CD8-positive, alpha-beta T cell (primary cell): ENCODE measurements at regions of chr19 and their contacts with region 1.

Region 1: GRCh38 chr19:15432629-15433518 is 14.1 kb upstream of the AKAP8L start:
- DNase-seq: peak; percentile 85 to 96 (median 91)
- ATAC-seq: peak; percentile 95
- H3K4me3 ChIP-seq: peak overlapping the region; percentile 88 to 100
- H3K4me3 Mint-ChIP-seq: peak overlapping the region; percentile 89
- H3K27ac ChIP-seq: peak overlapping the region; percentile 76 to 79
- H3K27ac Mint-ChIP-seq: peak overlapping the region; percentile 87
- H3K4me1 ChIP-seq: peaks cover 31% of the 10 kb centered on the region
- H3K4me1 Mint-ChIP-seq: peaks cover 26% of the 10 kb centered on the region
- H3K27me3 ChIP-seq: no peaks in the 10 kb centered on the region
- H3K27me3 Mint-ChIP-seq: no peaks in the 10 kb centered on the region
- CTCF ChIP-seq: no peak

Region 2: GRCh38 chr19:15466851-15467733 is 34.2 kb after region 1 on chr19:
- CTCF ChIA-PET with region 1: interaction called, 6 read pairs
- POLR2A ChIA-PET with region 1: interaction called, 8 read pairs
- intact Hi-C with region 1: loop called (anchors 1 to 5 kb)
- DNase-seq: peak in 8 of 9 experiments; percentile 32 to 75 (median 59)
- ATAC-seq: peak; percentile 25
- H3K4me3 ChIP-seq: no peak overlapping the region
- H3K4me3 Mint-ChIP-seq: peak overlapping the region; percentile 50
- H3K27ac ChIP-seq: peak overlapping the region in 1 of 2 experiments; percentile 68
- H3K27ac Mint-ChIP-seq: peak overlapping the region; percentile 89
- H3K4me1 ChIP-seq: peaks cover 58% of the 10 kb centered on the region
- H3K4me1 Mint-ChIP-seq: peaks cover 61% of the 10 kb centered on the region
- H3K27me3 ChIP-seq: no peaks in the 10 kb centered on the region
- H3K27me3 Mint-ChIP-seq: no peaks in the 10 kb centered on the region
- CTCF ChIP-seq: no peak

Region 3: DNA sequence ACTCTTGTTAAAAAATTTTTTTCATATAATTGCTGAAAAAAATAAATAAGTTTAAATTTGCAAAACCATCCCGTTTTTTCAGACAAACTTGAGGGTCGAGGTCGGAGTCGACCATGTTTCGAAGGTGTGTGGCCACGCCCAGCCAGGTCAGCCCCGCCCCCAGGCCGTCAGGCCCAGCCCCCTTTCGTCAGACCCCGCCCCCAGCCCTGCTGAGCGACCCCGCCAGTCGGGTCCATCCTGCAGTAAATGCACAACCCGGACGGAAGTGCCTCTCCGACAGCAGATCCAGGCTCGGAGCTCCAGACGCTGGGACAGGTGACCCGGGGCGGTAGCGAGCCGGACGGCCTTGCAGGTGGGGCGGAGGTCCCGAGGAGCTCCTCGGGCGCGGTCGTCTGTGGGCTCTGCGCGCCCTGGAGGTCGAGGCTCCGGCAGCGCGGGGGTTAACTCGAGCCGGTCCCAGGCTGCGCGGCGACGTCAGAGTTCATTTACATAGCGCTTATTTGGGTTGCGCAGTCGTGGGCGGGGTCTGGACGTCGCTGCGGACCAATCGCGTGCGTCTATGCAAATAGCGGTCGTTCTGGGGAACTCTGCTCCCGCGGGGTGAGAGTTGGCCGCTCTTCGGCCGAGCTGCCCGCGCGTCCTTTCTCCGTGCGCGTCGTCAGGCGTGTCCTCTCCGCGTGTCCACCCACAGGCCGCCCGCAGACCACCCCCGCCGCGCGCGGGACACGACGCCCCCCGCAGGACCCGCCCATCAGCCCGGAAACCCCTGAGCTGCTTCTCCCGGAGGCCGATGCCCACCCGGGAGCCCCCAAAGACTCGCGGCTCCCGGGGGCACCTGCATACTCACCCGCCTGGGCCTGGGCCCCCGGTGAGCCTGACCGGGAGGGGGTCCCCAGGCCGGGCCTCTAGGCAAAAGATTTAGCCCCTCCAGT is 1793.4 kb after region 1 on chr19 and contains the start of gene OCEL1:
- CTCF ChIA-PET with region 1: no interaction called
- POLR2A ChIA-PET with region 1: no interaction called
- intact Hi-C with region 1: loop called in 1 of 2 experiments (anchors 5 kb)
- DNase-seq: peak; percentile 92 to 99 (median 96)
- ATAC-seq: peak; percentile 91
- H3K4me3 ChIP-seq: peak within 1 kb of the TSS; percentile 71 to 100
- H3K4me3 Mint-ChIP-seq: peak within 1 kb of the TSS; percentile 91
- H3K27ac ChIP-seq: peak within 1 kb of the TSS; percentile 89 to 96
- H3K27ac Mint-ChIP-seq: peak within 1 kb of the TSS; percentile 95
- H3K4me1 ChIP-seq: peaks cover 13% of the 10 kb centered on the region
- H3K4me1 Mint-ChIP-seq: peaks cover 8% of the 10 kb centered on the region
- H3K27me3 ChIP-seq: no peaks in the 10 kb centered on the region
- H3K27me3 Mint-ChIP-seq: no peaks in the 10 kb centered on the region
- CTCF ChIP-seq: no peak
- total RNA-seq, gene OCEL1: 20.9 to 24.9 TPM